Activated naive CD4-positive, alpha-beta T cell treated with anti-CD3 and anti-CD28 coated beads for 36 hours (primary cell): ENCODE measurements at regions of chr1 and their contacts with region 1.

Region 1: DNA sequence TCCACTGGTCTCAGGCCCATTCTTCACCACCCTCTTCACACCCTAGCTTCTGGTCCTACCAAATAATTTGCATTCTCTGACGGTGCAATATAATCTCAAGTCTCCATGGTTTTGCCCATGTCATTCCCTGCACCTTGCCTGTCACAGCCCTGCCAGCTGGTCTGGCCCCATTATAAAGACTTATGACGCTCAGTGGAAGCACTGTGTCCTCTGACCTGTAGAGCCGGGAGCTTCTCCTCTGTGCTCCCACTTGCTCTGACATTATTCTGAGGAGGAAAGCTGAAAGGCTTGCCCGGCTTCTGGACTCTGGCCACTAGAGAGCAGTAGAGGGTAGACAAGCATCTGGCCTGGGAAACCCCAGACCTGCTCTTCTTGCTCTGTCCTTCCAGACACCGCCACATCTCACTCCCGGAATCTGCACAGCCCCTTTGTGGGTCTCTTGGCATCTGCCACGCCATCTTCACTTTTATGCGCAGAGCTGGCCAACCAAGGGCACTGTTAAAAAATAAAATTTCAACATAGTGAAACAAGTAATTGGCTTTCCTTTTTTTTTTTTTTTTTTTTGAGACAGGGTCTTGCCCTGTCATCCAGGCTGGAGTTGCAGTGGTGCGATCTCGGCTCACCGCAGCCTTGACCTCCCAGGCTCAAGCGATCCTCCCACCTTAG is 44.4 kb downstream of the NENF start:
- DNase-seq: peak; percentile 91
- H3K4me3 Mint-ChIP-seq: no peak overlapping the region
- H3K27ac Mint-ChIP-seq: no peak overlapping the region
- H3K4me1 Mint-ChIP-seq: peaks cover 18% of the 10 kb centered on the region
- H3K27me3 Mint-ChIP-seq: peaks cover 9% of the 10 kb centered on the region

Region 2: DNA sequence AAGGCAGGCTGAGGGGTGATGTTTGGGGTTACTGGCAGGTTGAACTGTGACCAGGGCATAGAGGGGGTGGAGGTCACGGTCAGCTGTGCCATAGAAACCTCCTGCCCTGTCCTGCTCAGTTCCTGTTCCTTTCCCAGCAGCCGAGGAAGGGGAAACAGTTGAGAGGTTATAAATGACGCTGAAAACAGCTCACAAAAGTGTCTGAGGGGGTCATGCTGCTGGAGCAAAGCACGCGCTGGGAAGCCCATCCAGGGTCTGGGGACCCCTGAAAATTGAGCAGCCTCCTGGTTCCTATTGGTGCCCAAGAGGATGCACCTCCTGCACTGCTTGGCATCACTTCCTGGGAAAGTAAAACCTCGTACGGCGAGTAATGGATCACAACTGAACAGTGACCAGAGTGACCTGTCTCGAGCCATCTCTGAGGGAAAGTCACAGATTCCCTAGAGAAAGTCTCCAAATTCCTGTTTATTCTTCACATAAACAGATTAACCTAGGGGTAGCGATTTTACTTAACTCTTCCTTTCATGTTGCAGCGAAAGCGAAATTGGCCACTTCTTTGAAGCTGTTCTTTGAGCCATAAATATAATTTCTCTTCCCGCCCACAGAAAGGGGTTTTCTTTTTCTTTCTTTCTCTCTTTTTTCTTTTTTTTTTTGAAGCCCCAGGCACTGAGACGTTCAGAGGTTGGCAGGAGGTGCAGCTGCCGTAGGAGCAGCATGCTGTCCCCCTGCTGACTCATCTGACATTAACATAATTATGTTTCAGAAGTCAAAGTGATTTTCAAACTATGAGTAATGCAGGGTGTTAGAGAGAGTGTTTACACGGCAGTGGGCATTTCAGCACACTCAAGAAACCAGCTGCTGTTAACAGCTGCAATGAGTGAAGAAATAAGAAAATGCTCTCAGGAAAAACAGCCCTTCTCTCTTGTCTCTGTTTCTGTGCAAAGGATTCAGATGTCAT is 89.7 kb after region 1 on chr1:
- CTCF ChIA-PET with region 1: interaction called, 14 read pairs
- intact Hi-C with region 1: loop called (anchors 1 kb)
- DNase-seq: peak; percentile 80
- H3K4me3 Mint-ChIP-seq: peak overlapping the region; percentile 78
- H3K27ac Mint-ChIP-seq: peak overlapping the region; percentile 88
- H3K4me1 Mint-ChIP-seq: peaks cover 32% of the 10 kb centered on the region
- H3K27me3 Mint-ChIP-seq: no peaks in the 10 kb centered on the region

Region 3: DNA sequence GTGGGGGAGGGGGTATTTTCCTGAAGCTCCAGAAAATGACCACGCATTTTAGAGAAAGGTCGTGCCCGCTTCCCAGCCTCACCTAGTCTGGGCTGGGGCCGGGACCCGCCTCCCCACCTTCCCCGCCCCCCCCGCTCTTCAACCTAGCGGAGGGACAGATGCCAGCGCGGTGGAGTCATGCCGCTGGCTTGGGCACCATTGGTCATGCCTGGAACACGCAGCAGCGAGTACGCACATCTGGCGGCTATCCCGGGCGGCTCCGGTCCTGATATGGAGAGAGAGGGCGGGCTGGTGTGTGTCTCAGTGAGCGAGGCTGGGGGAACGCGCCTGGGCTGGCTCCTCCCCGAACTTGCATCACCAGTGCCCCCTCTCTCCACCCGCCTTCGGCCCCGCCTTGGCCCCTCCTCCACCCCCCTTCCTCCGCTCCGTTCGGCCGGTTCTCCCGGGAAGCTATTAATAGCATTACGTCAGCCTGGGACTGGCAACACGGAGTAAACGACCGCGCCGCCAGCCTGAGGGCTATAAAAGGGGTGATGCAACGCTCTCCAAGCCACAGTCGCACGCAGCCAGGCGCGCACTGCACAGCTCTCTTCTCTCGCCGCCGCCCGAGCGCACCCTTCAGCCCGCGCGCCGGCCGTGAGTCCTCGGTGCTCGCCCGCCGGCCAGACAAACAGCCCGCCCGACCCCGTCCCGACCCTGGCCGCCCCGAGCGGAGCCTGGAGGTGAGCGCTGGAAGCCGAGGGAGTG is 131.2 kb after region 1 on chr1 and contains the start of gene ATF3:
- CTCF ChIA-PET with region 1: interaction called, 21 read pairs
- intact Hi-C with region 1: loop called (anchors 1 kb)
- DNase-seq: peak; percentile 98
- H3K4me3 Mint-ChIP-seq: peak within 1 kb of the TSS; percentile 90
- H3K27ac Mint-ChIP-seq: peak within 1 kb of the TSS; percentile 92
- H3K4me1 Mint-ChIP-seq: peaks cover 52% of the 10 kb centered on the region
- H3K27me3 Mint-ChIP-seq: peaks cover 43% of the 10 kb centered on the region
- total RNA-seq, gene ATF3: 67.4 to 67.7 TPM

Region 4: DNA sequence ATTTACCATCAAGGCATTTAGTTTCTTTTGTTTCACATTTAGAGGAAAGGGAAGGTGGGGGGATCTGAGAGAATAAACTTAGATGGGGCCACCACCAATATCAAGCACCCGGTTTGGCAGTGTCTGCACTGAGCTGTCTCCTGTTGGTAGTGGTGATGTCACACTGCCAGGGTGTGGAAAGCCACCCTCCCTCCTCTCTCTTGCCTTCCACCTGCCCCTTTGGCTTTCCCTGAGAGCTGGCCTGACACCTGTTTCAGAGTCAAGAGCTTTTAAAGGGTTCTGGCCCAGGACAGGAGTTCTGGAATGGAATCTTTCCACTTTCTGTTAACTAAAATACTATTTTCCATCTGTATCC is 144.8 kb after region 1 on chr1:
- CTCF ChIA-PET with region 1: interaction called, 17 read pairs
- intact Hi-C with region 1: no loop called
- DNase-seq: peak; percentile 34
- H3K4me3 Mint-ChIP-seq: no peak overlapping the region
- H3K27ac Mint-ChIP-seq: no peak overlapping the region
- H3K4me1 Mint-ChIP-seq: peaks cover 21% of the 10 kb centered on the region
- H3K27me3 Mint-ChIP-seq: no peaks in the 10 kb centered on the region

Region 5: DNA sequence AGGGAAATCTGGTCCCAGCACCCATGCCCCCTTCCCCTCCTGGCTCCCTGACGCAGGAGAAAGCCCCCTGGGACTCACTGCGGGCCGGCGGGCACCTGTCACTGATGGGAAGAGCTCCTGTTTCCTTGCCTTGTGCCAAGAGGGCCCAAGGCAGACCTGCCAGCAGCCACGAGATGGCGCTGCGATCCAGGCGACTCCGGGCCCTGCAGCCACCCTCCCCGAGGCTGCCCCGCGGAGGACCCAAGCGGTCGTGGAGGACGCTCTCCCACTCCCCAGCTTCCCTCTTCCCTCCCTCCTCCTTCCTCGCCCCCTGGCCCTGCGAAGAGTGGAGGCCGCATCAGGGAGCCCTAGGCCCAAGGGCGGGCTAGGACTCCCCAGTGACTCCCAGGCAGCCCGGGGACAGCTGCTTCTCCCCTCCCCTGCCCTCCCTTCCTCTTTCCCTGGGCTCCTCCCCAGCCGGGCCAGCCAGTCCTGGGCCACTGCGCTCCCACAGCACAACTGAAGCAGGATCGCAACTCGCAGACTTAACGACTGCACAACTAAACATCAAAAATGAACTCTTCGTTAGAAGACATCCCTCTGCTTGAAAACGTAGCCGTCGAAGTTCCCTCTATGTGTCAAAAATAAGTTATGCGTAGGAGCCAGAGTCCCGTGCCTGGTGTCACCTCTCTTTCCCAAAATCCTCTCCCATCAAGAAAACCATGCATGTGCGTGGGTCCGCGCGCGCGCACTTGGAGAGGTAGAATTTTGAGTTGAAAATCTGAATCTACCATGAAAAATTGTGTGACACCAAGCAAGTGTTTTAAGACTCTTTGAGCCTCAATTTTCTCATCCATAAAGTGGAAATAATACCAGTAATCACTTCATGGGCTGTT is 188.3 kb after region 1 on chr1:
- CTCF ChIA-PET with region 1: interaction called, 34 read pairs
- intact Hi-C with region 1: loop called (anchors 1 kb)
- DNase-seq: peak; percentile 84
- H3K4me3 Mint-ChIP-seq: peak overlapping the region; percentile 70
- H3K27ac Mint-ChIP-seq: peak overlapping the region; percentile 56
- H3K4me1 Mint-ChIP-seq: peaks cover 5% of the 10 kb centered on the region
- H3K27me3 Mint-ChIP-seq: peaks cover 9% of the 10 kb centered on the region

Region 6: GRCh38 chr1:212760126-212760823 is 283.1 kb after region 1 on chr1:
- CTCF ChIA-PET with region 1: no interaction called
- intact Hi-C with region 1: loop called (anchors 5 kb)
- DNase-seq: peak; percentile 75
- H3K4me3 Mint-ChIP-seq: no peak overlapping the region
- H3K27ac Mint-ChIP-seq: no peak overlapping the region
- H3K4me1 Mint-ChIP-seq: peaks cover 13% of the 10 kb centered on the region
- H3K27me3 Mint-ChIP-seq: no peaks in the 10 kb centered on the region

Region 7: DNA sequence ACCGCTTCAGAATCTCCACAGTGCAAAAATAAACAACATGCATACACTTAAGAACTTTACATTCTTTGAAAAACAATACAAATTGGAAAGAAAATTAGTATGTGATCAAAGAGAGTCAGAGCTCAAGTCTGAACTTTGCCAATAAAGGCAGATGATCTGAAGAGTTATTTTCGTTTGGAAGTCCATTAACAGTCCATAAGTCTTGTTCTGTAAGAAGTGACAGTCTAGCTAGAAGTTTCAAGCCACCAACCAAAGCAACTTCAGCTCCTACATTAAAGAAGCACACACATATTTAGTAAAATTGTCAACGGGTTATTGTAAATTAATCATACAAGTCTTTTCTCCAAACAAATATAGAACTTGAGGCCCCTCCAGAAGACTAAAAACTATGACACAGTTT is 517.8 kb after region 1 on chr1:
- CTCF ChIA-PET with region 1: no interaction called
- intact Hi-C with region 1: loop called (anchors 1 kb)
- DNase-seq: no peak
- H3K4me3 Mint-ChIP-seq: no peak overlapping the region
- H3K27ac Mint-ChIP-seq: no peak overlapping the region
- H3K4me1 Mint-ChIP-seq: peaks cover 4% of the 10 kb centered on the region
- H3K27me3 Mint-ChIP-seq: no peaks in the 10 kb centered on the region